ENCODE measurements at regions of chr2 and their contacts with region 1.

Region 1: GRCh38 chr2:121810959-121811853 is 55.8 kb downstream of the TSN start:
- DNase-seq: peak; percentile 81
- ATAC-seq: peak; percentile 92

Region 2: DNA sequence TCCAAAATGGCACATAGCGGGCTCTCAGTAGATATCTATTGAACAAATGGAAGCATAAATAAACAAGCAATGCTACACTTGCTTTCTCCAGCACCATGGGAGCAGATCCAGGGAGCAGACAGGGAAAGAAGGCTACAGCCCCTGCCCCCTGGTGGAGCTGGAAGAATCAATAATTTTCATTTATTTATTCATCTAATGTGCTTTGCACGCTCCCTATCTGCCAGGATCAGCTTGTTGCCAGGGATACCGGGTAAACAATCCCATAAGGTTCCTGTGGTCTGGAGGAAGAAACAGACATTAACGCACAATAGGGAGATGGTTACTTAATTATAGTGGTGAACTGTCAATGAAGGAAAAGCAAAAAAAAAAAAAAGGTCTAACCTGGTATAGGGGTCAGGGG is 121.8 kb before region 1 on chr2:
- intact Hi-C with region 1: no loop called
- DNase-seq: no peak
- ATAC-seq: peak; percentile 37

Region 3: DNA sequence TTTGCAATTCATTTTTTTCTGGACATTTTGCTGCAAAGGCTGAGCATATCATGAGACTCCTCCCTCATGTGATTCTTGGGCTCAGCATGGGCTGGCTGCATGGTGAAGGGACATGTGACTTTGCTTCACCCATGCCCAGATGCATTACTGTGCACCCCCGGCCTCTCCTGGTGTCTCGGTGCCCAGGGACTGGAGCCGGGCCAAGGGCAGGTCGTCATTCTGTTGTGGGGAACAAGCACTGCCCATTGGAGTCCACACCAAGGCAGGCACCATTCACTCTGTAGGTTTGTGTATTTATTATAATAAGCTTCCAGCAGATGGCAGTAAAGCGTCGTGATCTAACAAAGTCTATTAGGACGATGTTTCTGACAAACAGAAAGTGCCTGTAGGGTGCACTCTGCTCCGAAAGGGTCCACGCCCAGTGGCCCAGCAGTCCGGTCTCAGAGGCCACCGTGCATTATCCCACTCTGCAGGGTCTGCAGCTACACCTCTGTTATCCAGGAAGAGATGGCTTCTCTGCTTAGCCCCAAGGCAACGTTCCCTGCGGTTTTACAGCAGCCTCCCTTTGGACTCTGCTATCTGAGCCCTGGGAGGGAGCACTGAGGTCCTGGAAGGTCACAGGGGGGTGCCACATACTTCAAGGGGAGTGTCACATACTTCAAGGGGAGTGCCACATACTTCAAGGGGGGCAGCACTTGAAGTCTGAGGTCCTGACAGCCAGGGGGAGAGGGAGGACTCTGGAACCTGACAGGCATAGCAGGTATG is 163.9 kb after region 1 on chr2:
- intact Hi-C with region 1: loop called (anchors 10 kb)
- DNase-seq: no peak
- ATAC-seq: peak; percentile 91